ENCODE measurements at regions of chr11 and their contacts with region 1.

Region 1: GRCh38 chr11:6377902-6378639 is 12.2 kb upstream of the SMPD1 start:
- DNase-seq: no peak
- ATAC-seq: peak; percentile 70
- H3K4me3 Mint-ChIP-seq: no peak overlapping the region
- H3K27ac Mint-ChIP-seq: peak overlapping the region; percentile 69
- H3K4me1 Mint-ChIP-seq: peaks cover 24% of the 10 kb centered on the region
- H3K27me3 Mint-ChIP-seq: no peaks in the 10 kb centered on the region
- CTCF ChIP-seq: no peak

Region 2: DNA sequence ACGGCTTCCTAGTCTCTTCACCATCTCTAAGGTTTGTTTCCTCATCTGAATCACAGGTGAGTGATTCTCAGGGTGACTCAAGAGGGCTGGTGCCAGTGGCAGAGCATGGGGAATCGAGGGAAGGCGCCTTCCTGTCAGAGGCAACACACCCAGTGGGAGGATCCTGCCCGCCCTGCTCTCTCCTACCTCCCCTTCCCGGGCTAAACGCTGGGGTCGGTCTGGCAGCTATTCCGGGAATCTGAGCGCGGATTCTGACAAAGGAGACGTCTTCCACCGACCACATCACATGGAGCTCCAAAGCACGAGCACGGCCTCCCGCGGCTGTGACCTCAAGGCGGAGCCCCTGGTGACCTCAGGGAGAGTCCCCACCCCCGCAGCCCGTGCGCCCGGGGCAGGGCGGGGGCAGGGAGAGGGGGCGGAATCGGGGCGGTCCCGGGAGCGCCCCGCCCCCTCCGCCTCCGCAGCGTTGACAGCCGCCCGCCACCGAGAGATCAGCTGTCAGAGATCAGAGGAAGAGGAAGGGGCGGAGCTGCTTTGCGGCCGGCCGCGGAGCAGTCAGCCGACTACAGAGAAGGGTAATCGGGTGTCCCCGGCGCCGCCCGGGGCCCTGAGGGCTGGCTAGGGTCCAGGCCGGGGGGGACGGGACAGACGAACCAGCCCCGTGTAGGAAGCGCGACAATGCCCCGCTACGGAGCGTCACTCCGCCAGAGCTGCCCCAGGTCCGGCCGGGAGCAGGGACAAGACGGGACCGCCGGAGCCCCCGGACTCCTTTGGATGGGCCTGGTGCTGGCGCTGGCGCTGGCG is 12.1 kb after region 1 on chr11 and contains the start of gene SMPD1:
- CTCF ChIA-PET with region 1: interaction called, 65 read pairs
- POLR2A ChIA-PET with region 1: interaction called, 3 read pairs
- intact Hi-C with region 1: no loop called
- DNase-seq: peak; percentile 95
- ATAC-seq: peak; percentile 83
- H3K4me3 Mint-ChIP-seq: peak within 1 kb of the TSS; percentile 79
- H3K27ac Mint-ChIP-seq: peak within 1 kb of the TSS; percentile 94
- H3K4me1 Mint-ChIP-seq: peaks cover 44% of the 10 kb centered on the region
- H3K27me3 Mint-ChIP-seq: no peaks in the 10 kb centered on the region
- CTCF ChIP-seq: no peak
- total RNA-seq, gene SMPD1: 10.6 to 11.2 TPM

Region 3: DNA sequence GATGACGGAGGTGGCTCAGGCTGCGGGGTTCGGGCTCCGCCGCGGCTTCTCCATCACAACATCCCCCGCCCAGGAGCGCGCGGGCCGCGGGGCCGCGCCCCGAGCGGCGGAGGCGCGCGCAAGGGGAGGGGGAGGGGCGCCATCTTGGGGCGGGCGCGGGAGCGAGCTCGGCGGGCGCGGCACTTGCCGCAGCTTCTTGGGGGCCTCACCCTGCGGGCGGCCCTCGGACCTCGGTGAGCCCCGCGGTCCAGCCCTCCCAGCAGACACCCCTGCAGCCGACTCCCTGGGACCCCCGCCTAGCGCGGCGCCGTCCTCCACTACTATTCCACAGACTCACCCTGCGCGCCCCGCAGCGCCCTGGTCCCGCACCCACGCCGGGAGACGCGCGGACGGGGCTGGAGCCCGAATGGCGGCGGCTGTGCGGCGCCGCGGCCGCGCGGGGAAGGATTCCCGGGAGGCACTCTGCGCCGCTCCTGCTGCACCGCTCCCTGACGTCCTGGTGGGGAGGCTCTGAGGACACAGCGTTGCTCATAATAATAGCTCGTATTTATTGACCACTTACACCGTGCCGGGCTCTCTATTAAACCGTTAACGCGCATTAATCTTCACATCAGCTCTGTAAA is 41.0 kb after region 1 on chr11 and contains the start of gene APBB1:
- CTCF ChIA-PET with region 1: interaction called, 60 read pairs
- POLR2A ChIA-PET with region 1: interaction called, 3 read pairs
- intact Hi-C with region 1: no loop called
- DNase-seq: peak; percentile 69
- ATAC-seq: peak; percentile 72
- H3K4me3 Mint-ChIP-seq: no peak within 1 kb of the TSS
- H3K27ac Mint-ChIP-seq: peak within 1 kb of the TSS; percentile 75
- H3K4me1 Mint-ChIP-seq: peaks cover 4% of the 10 kb centered on the region
- H3K27me3 Mint-ChIP-seq: peaks cover 8% of the 10 kb centered on the region
- CTCF ChIP-seq: no peak
- total RNA-seq, gene APBB1: 28.1 to 31.1 TPM

Region 4: DNA sequence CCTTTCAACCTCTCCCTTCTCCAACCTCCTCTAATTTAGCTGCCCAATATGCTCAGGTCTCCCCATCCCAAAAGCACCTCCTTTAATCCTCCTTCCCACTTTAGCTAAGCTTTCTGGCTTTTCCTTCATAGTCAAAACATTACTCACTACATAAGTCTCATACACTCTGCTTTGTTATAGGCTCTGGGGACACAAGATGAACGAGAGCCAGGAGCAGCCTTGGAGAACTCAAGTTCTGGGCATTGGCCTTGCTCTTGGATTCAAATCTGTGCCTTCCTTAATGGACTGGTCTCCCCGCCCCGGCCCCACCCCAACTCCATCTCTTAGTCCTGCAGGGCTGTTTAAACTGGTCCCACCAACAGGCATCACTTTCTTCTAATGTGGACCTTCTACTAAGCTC is 74.1 kb after region 1 on chr11:
- CTCF ChIA-PET with region 1: interaction called, 652 read pairs
- POLR2A ChIA-PET with region 1: interaction called, 3 read pairs
- intact Hi-C with region 1: no loop called
- DNase-seq: no peak
- ATAC-seq: no peak
- H3K4me3 Mint-ChIP-seq: no peak overlapping the region
- H3K27ac Mint-ChIP-seq: no peak overlapping the region
- H3K4me1 Mint-ChIP-seq: no peaks in the 10 kb centered on the region
- H3K27me3 Mint-ChIP-seq: no peaks in the 10 kb centered on the region
- CTCF ChIP-seq: no peak

Region 5: DNA sequence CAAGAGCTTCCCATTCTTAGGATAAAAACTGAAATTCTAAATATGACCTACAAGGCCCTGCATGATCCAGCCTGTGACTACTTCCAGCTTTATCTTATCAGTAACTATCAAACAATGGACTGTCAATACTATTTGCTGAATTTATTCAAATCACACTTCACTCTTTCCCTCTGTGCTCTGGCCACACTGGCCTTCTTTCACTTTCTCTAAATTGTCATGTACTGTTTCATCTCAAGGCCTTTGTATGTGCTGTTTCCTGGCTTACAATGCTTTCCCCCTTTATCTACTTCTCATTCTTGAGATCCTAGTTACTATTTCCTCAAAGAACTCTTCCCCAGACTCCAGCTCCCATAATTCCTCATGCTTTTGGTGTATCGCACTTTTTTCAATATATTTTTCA is 108.9 kb after region 1 on chr11:
- CTCF ChIA-PET with region 1: interaction called, 32 read pairs
- POLR2A ChIA-PET with region 1: interaction called, 5 read pairs
- intact Hi-C with region 1: no loop called
- DNase-seq: no peak
- ATAC-seq: no peak
- H3K4me3 Mint-ChIP-seq: no peak overlapping the region
- H3K27ac Mint-ChIP-seq: no peak overlapping the region
- H3K4me1 Mint-ChIP-seq: peaks cover 19% of the 10 kb centered on the region
- H3K27me3 Mint-ChIP-seq: no peaks in the 10 kb centered on the region
- CTCF ChIP-seq: no peak

Region 6: GRCh38 chr11:6531267-6531752 is 153.2 kb after region 1 on chr11:
- CTCF ChIA-PET with region 1: interaction called, 16 read pairs
- POLR2A ChIA-PET with region 1: no interaction called
- intact Hi-C with region 1: no loop called
- DNase-seq: peak; percentile 22
- ATAC-seq: peak; percentile 69
- H3K4me3 Mint-ChIP-seq: no peak overlapping the region
- H3K27ac Mint-ChIP-seq: no peak overlapping the region
- H3K4me1 Mint-ChIP-seq: peaks cover 12% of the 10 kb centered on the region
- H3K27me3 Mint-ChIP-seq: no peaks in the 10 kb centered on the region
- CTCF ChIP-seq: peak; percentile 81